ENCODE measurements at regions of chr1 and their contacts with region 1.

Region 1: DNA sequence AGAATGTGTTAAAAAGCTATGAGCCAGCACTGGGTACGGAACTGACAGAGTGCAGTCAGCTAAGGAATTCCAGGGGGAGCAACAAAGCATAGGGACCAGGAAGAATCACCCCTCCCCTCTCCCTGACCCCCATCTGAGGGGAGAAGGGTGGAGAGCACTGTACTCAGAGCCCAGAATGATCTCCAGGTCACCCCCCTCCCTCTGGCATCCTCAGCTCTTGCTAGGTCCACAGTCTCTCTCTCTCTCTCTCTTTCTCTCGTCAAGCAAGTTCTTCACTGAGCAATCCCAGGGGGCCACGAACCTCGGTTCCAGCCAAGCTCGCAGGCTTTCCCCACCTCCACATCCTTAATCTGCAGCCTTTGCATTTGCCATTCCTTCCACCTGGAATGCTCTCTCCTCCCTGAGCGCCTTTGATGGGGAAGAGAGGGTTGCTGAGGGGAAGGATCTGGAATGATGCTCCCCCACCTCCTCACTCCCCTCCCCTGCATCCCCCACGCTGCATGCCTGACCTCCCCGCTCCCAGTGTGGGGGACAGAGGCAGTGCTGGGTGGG is 6.7 kb upstream of the WASF2 start:
- DNase-seq: peak; percentile 76
- ATAC-seq: peak; percentile 97
- H3K4me3 Mint-ChIP-seq: peak overlapping the region; percentile 53
- H3K27ac Mint-ChIP-seq: peak overlapping the region; percentile 90
- H3K4me1 Mint-ChIP-seq: peaks cover 23% of the 10 kb centered on the region
- H3K27me3 Mint-ChIP-seq: no peaks in the 10 kb centered on the region
- CTCF ChIP-seq: no peak

Region 2: DNA sequence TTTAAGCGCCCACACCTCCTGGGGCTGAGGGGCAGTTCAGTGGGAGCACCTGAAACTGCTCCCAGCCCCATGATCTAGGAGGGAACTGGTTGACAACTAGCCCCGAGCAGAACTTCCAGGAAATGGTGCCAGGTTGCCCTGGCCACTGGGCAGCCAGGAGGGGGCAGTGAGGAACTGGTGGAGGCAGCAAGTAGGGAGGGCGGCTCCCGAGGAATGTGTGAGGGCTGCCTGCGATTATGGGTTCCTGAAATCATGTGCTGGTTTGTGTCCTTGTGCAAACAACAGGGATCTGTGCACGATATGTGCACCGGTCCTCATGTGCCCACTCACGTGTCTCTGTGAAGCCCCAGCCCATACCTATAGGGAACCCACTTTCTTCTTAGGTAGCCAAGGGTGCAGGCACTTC is 94.3 kb before region 1 on chr1:
- CTCF ChIA-PET with region 1: interaction called, 11 read pairs
- POLR2A ChIA-PET with region 1: no interaction called
- DNase-seq: peak; percentile 69
- ATAC-seq: peak; percentile 18
- H3K4me3 Mint-ChIP-seq: no peak overlapping the region
- H3K27ac Mint-ChIP-seq: peak overlapping the region; percentile 91
- H3K4me1 Mint-ChIP-seq: peaks cover 78% of the 10 kb centered on the region
- H3K27me3 Mint-ChIP-seq: no peaks in the 10 kb centered on the region
- CTCF ChIP-seq: no peak

Region 3: GRCh38 chr1:27416387-27417111 is 80.1 kb before region 1 on chr1:
- CTCF ChIA-PET with region 1: interaction called, 22 read pairs
- POLR2A ChIA-PET with region 1: no interaction called
- DNase-seq: no peak
- ATAC-seq: peak; percentile 67
- H3K4me3 Mint-ChIP-seq: no peak overlapping the region
- H3K27ac Mint-ChIP-seq: peak overlapping the region; percentile 50; the same call in 1 of the 2 replicates
- H3K4me1 Mint-ChIP-seq: peaks cover 41% of the 10 kb centered on the region
- H3K27me3 Mint-ChIP-seq: no peaks in the 10 kb centered on the region
- CTCF ChIP-seq: 0 out of 2 replicates have a peak, but pooled peaks have one; percentile 1

Region 4: DNA sequence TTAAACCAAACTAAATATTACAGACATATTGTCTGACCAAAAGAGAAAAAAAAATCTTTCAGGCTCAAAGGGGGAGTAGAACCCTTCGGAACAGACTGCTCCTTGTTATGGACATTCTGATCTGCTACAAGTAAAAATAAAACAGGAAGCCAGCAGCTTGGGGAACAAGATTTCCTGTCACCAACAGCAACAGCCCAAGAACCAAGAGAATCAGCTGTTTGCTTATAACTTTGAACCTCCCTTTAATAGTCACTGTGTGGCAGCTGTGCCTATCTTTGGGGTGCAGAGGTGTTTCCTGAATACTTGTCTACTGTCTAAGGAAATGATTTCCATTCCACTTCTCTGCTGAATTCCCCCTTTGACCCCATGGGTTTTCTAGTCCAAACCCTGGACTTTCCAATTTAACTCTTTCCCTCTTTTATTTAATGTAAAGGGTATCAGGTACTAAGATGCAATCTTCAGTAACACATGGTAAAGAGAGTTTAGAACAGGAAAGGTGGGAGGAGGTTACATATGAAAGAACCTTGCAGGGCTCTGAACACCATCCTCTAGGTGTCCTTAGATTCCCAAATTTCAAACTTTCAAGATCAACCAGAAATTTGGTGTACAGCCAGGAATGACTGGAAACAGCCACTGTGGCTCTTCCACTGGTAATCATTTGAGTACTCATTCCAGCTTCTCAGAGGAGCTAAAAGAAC is 65.6 kb before region 1 on chr1:
- CTCF ChIA-PET with region 1: interaction called, 10 read pairs
- POLR2A ChIA-PET with region 1: interaction called, 3 read pairs
- DNase-seq: no peak
- ATAC-seq: no peak
- H3K4me3 Mint-ChIP-seq: no peak overlapping the region
- H3K27ac Mint-ChIP-seq: peak overlapping the region; percentile 91
- H3K4me1 Mint-ChIP-seq: peaks cover 75% of the 10 kb centered on the region
- H3K27me3 Mint-ChIP-seq: no peaks in the 10 kb centered on the region
- CTCF ChIP-seq: no peak

Region 5: DNA sequence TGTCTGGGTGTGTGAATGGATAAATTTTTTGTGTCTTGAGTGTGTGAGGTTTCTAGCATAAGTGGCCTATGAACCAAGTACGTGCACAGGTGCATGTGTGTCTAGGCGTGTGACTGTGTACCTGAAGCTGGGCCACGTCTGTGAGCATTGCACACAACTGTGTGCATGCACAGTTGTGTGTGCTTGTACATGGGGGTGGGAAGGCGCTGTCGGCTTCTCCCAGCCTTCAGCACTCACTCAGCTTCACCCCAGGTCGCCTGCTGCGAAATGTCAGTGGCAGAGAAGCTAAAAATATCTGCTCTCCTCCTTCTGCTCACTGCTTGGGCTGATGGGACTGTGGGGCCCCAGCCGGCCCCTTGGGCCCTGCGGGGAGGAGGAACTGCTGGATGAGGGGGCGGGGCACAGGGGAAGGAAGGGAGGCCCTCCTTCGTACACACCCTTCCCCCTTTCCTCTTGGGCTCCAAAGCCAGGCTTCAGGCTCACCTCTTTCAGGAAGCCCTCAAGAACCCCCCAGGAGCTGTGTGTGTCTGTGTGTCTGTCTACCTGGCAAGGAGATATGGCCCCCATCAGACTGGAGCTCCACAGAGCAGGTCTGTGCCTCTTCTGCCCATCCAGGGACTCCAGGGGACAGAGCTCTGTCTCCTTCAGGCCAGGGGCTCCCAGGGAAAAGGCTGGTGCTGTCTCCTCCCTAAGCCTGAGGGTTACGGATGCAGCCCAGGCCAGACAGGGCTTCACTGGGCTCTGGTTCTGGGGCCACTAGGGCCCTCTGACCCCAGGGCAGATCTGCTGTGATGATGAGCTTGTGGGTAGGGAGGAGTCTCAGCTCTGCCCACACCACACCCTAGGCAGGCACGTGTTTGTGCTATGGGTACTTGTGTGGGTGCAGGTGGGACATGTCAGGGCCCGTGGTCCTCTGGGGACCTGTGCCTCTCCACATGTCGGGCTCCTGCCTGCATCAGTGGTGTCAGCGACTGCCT is 28.9 kb after region 1 on chr1:
- CTCF ChIA-PET with region 1: interaction called, 13 read pairs
- POLR2A ChIA-PET with region 1: interaction called, 4 read pairs
- DNase-seq: peak; percentile 79
- ATAC-seq: peak; percentile 50
- H3K4me3 Mint-ChIP-seq: peak overlapping the region; percentile 55
- H3K27ac Mint-ChIP-seq: peak overlapping the region; percentile 85
- H3K4me1 Mint-ChIP-seq: peaks cover 70% of the 10 kb centered on the region
- H3K27me3 Mint-ChIP-seq: no peaks in the 10 kb centered on the region; the same call in 1 of the 2 replicates
- CTCF ChIP-seq: no peak

Region 6: GRCh38 chr1:27542408-27543273 is 46.0 kb after region 1 on chr1:
- CTCF ChIA-PET with region 1: interaction called, 10 read pairs
- POLR2A ChIA-PET with region 1: no interaction called
- DNase-seq: no peak
- ATAC-seq: no peak
- H3K4me3 Mint-ChIP-seq: no peak overlapping the region
- H3K27ac Mint-ChIP-seq: peak overlapping the region; percentile 92
- H3K4me1 Mint-ChIP-seq: peaks cover 40% of the 10 kb centered on the region
- H3K27me3 Mint-ChIP-seq: no peaks in the 10 kb centered on the region
- CTCF ChIP-seq: no peak

Region 7: GRCh38 chr1:27574871-27575831 is 78.5 kb after region 1 on chr1:
- CTCF ChIA-PET with region 1: interaction called, 29 read pairs
- POLR2A ChIA-PET with region 1: interaction called, 5 read pairs
- DNase-seq: peak; percentile 86
- ATAC-seq: peak; percentile 33
- H3K4me3 Mint-ChIP-seq: peak overlapping the region; percentile 63
- H3K27ac Mint-ChIP-seq: peak overlapping the region; percentile 71; the same call in 1 of the 2 replicates
- H3K4me1 Mint-ChIP-seq: peaks cover 56% of the 10 kb centered on the region
- H3K27me3 Mint-ChIP-seq: no peaks in the 10 kb centered on the region
- CTCF ChIP-seq: peak; percentile 28; the same call in 1 of the 2 replicates